Adrenal gland (tissue), 19 donors: ENCODE measurements at regions of chr16 and their contacts with region 1.

Region 1: DNA sequence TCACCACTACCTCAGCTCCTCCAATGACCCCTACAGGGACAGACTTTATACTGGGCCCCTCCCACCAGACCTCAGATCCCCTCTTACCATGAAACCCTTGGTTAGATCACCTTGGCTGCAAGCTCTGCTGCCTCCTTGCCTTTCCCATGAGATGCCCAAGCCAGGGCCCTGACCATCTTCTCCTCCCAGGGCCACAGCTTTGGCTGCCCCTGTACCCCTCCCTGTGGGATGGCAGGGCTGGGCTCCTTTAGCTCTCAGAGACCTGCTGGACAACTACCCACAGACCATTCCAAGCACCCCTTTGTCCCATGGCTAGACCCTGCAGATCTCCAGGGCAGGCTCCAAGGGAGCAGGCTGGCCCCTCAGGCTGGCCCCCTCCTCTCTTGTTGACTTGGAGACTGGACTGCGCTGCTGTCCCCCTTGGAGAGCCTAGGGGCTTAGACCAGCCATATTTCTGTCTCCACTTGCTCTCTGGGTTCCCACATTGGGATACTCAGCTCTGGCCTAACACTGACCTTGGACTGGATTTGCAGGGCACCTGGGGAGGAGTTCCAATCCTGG is 1692.7 kb downstream of the TP53TG3F start:
- DNase-seq: peak in 1 of 7 donors; percentile 30
- H3K4me3 ChIP-seq: no peak overlapping the region
- H3K27ac ChIP-seq: no peak overlapping the region
- H3K4me1 ChIP-seq: no peaks in the 10 kb centered on the region
- H3K27me3 ChIP-seq: no peaks in the 10 kb centered on the region
- CTCF ChIP-seq: no peak
- POLR2A ChIP-seq: no peak

Region 2: DNA sequence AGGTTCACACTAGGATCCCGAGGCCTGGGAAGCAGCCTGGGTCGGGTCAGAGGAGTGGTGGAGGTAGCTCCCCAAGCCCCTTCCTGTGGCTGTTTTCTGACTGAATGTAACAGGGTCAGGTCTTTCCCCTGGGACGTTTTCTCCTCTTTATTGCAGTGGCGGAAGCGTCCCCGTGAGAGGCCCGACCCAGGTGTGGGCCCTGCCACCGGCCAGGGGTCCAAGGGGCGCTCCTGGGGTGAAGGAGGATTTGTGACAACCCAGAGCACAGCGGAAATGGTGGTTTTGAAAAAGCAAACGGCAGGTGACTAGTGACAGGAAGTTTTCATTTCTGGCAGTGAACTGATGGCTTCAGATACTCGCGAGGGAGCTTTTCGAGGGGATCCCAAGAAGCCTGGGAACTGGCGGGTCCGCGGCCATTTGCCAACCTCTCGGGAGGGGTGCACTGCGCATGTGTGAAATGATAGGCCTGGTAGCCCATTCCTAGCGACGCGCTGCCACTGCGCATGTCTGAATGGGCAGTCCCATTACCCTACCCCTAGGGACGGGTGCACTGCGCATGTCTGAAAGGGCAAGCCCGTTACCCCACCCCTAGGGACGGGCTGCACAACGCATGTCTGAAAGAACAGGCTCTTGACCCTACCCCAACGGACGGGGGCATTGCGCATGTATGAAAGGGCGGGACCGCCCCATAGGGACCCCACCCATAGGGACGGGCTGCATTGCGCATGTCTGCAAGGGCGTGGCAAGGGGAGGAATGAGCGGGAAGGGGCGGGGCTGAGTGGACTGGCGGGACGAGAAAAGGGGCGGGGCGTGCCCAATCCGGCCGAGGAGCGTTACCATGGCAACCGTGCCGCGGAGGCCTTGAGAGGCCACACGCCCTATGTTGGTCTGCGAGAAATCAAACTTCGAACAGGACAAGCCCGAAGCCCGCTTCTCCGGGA is 55.2 kb after region 1 on chr16:
- intact Hi-C with region 1: loop called in 1 of 2 experiments (anchors 10 kb)
- DNase-seq: no peak
- H3K4me3 ChIP-seq: no peak overlapping the region
- H3K27ac ChIP-seq: no peak overlapping the region
- H3K4me1 ChIP-seq: no peaks in the 10 kb centered on the region
- H3K27me3 ChIP-seq: no peaks in the 10 kb centered on the region
- CTCF ChIP-seq: no peak
- POLR2A ChIP-seq: no peak